ENCODE measurements at regions of chr3 and their contacts with region 1.

Region 1: DNA sequence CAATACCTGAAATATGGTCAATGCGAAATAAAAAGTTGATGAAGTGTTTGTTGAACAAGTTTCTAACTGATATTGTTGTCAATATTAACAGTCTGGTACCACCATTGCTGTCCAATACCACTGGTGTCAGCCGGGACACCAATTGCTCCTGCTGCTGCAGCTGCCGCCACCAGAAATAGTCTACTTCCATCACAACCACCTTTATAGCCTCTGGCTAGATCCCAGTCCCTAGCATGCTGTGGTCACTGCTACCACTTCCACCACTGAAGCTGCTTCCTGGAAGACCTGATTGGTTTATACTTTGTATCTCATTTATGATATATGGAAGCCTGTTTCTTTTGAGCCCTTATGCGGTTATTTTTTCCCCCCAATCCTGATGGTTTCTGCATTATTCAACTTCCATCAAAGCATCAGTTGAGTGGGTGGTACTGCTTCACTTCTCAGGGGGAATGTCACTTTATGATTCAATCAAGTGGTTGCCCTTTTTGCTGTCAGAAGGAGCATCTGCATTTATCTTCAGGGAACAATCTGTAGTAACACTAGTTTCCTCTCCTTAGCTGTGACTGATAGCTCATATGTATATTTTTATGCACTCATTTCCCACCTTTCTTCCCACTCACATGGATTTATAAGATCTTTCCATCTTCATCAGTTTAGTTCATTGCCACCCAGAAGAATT is 11.7 kb downstream of the LNP1 start:
- DNase-seq: no peak
- ATAC-seq: no peak
- H3K4me3 ChIP-seq: no peak overlapping the region
- H3K27ac ChIP-seq: no peak overlapping the region
- H3K4me1 ChIP-seq: no peaks in the 10 kb centered on the region
- H3K27me3 ChIP-seq: no peaks in the 10 kb centered on the region
- CTCF ChIP-seq: no peak
- EP300 ChIP-seq: no peak
- POLR2A ChIP-seq: no peak
- RAD21 ChIP-seq: no peak

Region 2: GRCh38 chr3:99920481-99921376 is 492.3 kb before region 1 on chr3:
- CTCF ChIA-PET with region 1: no interaction called
- POLR2A ChIA-PET with region 1: no interaction called
- RAD21 ChIA-PET with region 1: no interaction called
- SMC1A ChIA-PET with region 1: no interaction called
- in situ Hi-C with region 1: no loop called
- intact Hi-C with region 1: no loop called
- DNase-seq: no peak
- ATAC-seq: peak; percentile 67
- H3K4me3 ChIP-seq: no peak overlapping the region
- H3K27ac ChIP-seq: no peak overlapping the region
- H3K4me1 ChIP-seq: peaks cover 4% of the 10 kb centered on the region
- H3K27me3 ChIP-seq: no peaks in the 10 kb centered on the region
- CTCF ChIP-seq: no peak
- EP300 ChIP-seq: no peak
- POLR2A ChIP-seq: no peak
- RAD21 ChIP-seq: no peak

Region 3: DNA sequence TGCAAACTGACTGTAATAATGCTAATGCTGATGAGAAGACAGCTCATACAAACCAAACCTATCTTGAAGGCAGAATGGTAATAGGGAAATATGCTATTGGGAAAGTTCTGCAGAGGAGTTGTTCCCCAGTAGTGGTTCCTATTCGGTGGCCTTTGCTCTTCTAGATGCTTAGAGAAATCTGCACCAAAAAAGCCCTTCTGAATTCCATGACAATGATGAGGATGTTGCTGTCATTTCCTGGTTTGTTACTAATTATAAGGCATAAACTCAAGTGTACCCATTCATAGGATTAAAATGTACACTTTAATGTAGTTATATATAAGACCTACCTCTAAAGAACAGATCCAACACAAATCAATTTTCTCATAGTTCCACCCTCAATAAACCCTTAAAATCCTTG is 42.3 kb before region 1 on chr3:
- CTCF ChIA-PET with region 1: no interaction called
- POLR2A ChIA-PET with region 1: interaction called, 11 read pairs
- RAD21 ChIA-PET with region 1: no interaction called
- SMC1A ChIA-PET with region 1: no interaction called
- in situ Hi-C with region 1: no loop called
- intact Hi-C with region 1: no loop called
- DNase-seq: no peak
- ATAC-seq: no peak
- H3K4me3 ChIP-seq: no peak overlapping the region
- H3K27ac ChIP-seq: no peak overlapping the region
- H3K4me1 ChIP-seq: no peaks in the 10 kb centered on the region
- H3K27me3 ChIP-seq: no peaks in the 10 kb centered on the region
- CTCF ChIP-seq: no peak
- EP300 ChIP-seq: no peak
- POLR2A ChIP-seq: no peak
- RAD21 ChIP-seq: no peak

Region 4: DNA sequence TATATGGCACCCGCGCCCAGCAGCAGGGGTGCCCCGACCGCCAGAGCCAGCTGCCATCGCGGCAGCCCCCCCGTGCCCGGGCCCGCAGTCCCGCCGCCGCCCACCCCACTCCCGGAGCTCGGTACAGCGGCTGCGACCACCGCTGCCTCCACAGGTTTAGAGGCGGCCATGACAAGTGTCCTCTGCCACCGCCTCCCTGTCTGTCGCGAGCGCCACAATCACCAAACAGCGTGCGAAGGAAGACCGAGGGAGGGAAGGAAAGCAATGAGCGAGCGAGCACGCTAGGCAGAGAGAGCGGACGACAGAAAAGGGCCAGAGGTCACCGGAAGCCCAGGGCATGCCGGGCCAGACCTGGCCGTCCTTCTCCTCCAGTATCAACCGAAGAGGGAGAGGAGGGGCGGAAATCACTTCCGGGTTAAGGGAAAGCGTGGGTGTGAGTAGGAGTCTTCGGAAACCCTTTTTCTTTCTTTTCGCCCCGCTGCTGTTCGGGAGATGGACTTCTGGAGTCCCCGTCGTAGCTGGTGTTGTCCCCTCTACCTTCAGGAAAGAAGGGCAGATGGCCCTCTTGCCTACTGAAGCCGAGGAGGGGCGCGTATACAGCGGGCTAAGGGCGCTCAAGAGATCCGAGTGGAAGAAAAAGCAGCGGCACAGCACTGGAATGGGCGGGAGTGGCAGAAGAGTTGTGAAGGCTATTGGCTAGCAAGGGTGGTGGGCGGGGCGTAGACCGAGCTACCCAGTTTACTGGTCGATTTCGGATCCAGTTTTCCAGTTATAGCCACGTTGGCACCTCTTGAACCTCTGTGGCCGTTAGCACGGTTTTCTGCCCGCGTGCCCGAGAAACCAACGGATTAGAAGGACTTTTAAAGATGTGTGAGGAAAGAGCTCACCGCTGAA is 12.0 kb before region 1 on chr3 and contains the starts of genes LNP1 and TOMM70:
- CTCF ChIA-PET with region 1: interaction called, 5 read pairs
- POLR2A ChIA-PET with region 1: interaction called, 16 read pairs
- RAD21 ChIA-PET with region 1: interaction called, 3 read pairs
- SMC1A ChIA-PET with region 1: interaction called, 4 read pairs
- in situ Hi-C with region 1: no loop called
- intact Hi-C with region 1: no loop called
- DNase-seq: peak; percentile 85
- ATAC-seq: peak; percentile 90
- H3K4me3 ChIP-seq: peak within 1 kb of the TSS; percentile 73
- H3K27ac ChIP-seq: peak within 1 kb of the TSS; percentile 99
- H3K4me1 ChIP-seq: no peaks in the 10 kb centered on the region
- H3K27me3 ChIP-seq: no peaks in the 10 kb centered on the region
- CTCF ChIP-seq: no peak
- EP300 ChIP-seq: no peak
- POLR2A ChIP-seq: peak; percentile 86
- RAD21 ChIP-seq: no peak
- polyA plus RNA-seq, gene LNP1: 2.1 to 2.5 TPM
- polyA plus RNA-seq, gene TOMM70: 12.7 to 22.6 TPM

Region 5: DNA sequence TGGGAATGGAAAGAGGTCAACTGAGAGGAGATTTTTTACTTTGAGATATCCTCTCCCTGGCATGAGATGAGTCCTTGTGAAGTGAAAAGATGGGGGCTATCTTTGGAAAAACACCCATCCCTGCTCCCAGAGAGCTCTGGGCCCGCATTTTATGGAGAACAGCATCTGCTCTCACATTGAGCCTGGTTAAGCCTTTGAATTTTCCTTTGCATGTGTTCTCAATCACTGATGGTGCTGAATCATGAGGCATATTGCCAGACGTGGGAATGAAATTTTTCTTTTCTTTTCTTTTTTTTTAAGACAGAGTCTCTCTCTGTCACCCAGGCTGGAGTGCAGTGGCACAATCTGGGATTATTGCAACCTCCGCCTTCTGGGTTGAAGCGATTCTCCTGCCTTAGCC is 103.8 kb after region 1 on chr3:
- CTCF ChIA-PET with region 1: no interaction called
- POLR2A ChIA-PET with region 1: no interaction called
- RAD21 ChIA-PET with region 1: no interaction called
- SMC1A ChIA-PET with region 1: no interaction called
- in situ Hi-C with region 1: no loop called
- intact Hi-C with region 1: no loop called
- DNase-seq: no peak
- ATAC-seq: no peak
- H3K4me3 ChIP-seq: no peak overlapping the region
- H3K27ac ChIP-seq: no peak overlapping the region
- H3K4me1 ChIP-seq: no peaks in the 10 kb centered on the region; the same call in 1 of the 2 replicates
- H3K27me3 ChIP-seq: no peaks in the 10 kb centered on the region
- CTCF ChIP-seq: no peak
- EP300 ChIP-seq: no peak
- POLR2A ChIP-seq: no peak
- RAD21 ChIP-seq: no peak

Measured in GM12878 (cell line).